ENCODE measurements at regions of chr13 and their contacts with region 1.

Region 1: DNA sequence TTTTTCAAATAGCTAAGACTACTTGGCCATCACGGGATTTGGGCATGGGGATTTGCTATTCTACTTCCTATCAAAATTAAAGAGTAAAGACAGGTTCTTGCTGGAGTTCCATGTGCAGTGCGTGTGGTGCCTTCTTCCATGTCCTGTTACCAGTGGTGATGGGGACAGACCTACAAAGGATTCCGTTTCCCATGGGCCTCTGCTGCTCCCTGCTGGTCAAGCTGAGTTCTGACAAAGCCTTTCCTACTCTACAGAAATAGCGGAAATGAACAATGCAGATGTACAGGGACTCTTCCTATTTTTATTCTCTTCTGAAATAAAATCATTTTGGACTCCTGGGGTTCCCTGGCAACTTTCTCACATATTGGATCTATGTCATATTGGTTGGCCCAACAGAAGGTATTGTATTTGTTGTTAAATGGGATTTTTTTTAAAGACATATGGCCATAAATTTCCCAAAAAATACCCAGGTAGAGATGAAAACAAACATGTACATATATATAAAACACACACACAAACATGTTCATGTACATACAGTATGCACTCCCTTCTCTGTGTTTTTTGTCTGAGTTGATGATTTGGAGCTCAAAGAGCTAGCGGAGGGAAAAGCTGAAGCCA is 90.5 kb upstream of the SLC15A1 start:
- DNase-seq: peak; percentile 19
- H3K4me3 ChIP-seq: no peak overlapping the region
- H3K27me3 ChIP-seq: no peaks in the 10 kb centered on the region
- CTCF ChIP-seq: peak; percentile 94

Region 2: DNA sequence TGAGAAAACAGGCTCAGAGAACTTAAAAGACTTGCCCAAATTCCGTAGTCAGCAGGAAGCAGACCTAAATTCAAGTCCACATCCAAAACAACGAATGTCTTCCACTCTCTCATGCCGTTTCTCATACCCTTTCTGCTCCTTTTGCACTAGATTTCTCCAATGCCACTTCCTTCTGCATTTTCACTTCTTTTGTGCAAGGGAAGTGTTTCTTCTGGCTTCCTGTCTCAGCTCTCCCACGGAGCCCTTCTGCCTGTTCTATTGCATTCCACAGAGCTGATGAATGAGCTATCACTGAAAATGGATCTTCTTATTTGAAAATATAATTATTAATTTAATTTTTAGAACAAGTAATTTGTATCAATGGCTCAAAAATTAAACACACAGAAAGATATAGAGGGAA is 210.0 kb before region 1 on chr13:
- CTCF ChIA-PET with region 1: no interaction called
- POLR2A ChIA-PET with region 1: no interaction called
- DNase-seq: no peak
- H3K4me3 ChIP-seq: no peak overlapping the region
- H3K27me3 ChIP-seq: 0 out of 2 replicates have a peak, but pooled peaks cover 1% of the 10 kb centered on the region
- CTCF ChIP-seq: no peak

Region 3: DNA sequence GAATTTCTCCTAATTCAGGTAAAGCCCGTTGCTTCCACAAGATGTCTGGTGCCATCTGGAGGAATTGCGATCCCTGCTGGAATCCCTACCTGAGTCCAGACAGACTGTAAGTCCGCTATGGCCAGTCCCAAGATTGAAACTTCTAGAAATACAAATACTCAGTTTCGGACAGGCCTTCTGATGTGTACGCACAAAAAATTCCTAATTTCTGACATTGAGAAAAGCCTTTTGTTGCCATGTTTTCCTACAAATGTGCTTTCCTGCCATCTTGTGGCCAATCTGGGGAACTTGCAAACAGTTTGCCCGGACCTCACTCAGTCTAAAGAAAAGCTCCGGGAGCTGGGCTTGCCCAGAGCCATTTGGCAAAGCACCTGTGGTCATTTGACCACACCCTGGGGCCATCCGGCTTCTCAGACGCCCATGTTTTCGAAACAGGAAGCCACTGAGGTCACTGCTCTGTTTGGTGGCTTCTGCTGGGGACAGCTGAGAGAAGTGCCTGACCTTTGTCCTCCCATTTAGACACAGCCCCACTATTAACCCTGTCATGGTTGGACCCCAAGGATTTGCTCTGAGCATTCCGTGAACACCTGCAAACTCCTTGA is 169.9 kb before region 1 on chr13:
- CTCF ChIA-PET with region 1: interaction called, 11 read pairs
- POLR2A ChIA-PET with region 1: no interaction called
- DNase-seq: no peak
- H3K4me3 ChIP-seq: no peak overlapping the region
- H3K27me3 ChIP-seq: peaks cover 2% of the 10 kb centered on the region; the same call in 1 of the 2 replicates
- CTCF ChIP-seq: peak; percentile 81

Region 4: GRCh38 chr13:98826146-98826545 is 16.8 kb before region 1 on chr13:
- CTCF ChIA-PET with region 1: interaction called, 37 read pairs
- POLR2A ChIA-PET with region 1: no interaction called
- DNase-seq: no peak
- H3K4me3 ChIP-seq: no peak overlapping the region
- H3K27me3 ChIP-seq: no peaks in the 10 kb centered on the region; the same call in 1 of the 2 replicates
- CTCF ChIP-seq: no peak

Region 5: GRCh38 chr13:98831236-98831635 is 11.7 kb before region 1 on chr13:
- CTCF ChIA-PET with region 1: interaction called, 37 read pairs
- POLR2A ChIA-PET with region 1: no interaction called
- DNase-seq: no peak
- H3K4me3 ChIP-seq: no peak overlapping the region
- H3K27me3 ChIP-seq: no peaks in the 10 kb centered on the region
- CTCF ChIP-seq: no peak

Region 6: GRCh38 chr13:98853771-98854221 is 10.8 kb after region 1 on chr13:
- CTCF ChIA-PET with region 1: interaction called, 18 read pairs
- POLR2A ChIA-PET with region 1: no interaction called
- DNase-seq: peak; percentile 43
- H3K4me3 ChIP-seq: no peak overlapping the region
- H3K27me3 ChIP-seq: no peaks in the 10 kb centered on the region
- CTCF ChIP-seq: no peak

Region 7: DNA sequence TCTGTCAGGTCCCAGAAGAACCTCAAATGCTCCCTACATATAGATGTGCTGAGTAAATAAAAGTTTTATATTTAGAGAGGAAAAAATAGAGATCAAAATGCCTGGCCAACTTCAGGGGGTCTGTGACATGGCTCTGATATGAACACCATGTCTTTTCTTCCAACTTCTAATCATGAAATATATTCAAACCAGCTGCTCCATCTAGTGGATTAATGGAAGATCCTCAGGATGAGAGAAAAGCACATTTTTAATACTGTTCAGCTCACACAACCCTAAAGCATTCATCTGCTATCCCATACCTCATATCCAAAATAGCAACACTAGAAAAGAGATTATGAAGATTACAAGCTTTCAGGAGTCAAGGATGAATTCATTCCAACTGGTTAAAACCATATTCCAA is 190.8 kb after region 1 on chr13:
- CTCF ChIA-PET with region 1: interaction called, 11 read pairs
- POLR2A ChIA-PET with region 1: no interaction called
- DNase-seq: no peak
- H3K4me3 ChIP-seq: no peak overlapping the region
- H3K27me3 ChIP-seq: no peaks in the 10 kb centered on the region
- CTCF ChIP-seq: peak; percentile 52

Measured in BJ (cell line).